Heart left ventricle (tissue), 16 donors: ENCODE measurements at regions of chr1 and their contacts with region 1.

Region 1: DNA sequence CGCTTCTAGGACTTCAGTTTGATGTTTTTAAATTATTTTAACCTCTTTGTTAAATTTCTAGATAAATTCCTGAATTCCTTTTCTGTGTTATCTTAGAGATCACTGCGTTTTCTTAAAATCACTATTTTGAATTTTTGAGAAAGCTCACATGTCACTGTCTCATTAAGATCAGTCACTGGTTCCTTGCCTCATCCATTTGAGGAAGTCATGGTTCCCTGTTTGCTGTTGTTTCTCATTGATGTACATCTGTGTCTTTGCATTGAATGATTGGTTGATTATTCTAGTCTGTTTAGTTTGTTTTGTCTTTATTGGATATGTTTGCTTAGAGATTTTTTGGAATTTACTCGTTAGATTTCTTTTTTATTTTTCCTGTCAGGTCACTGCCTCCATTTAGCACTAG is 50.1 kb downstream of the CRP start:
- DNase-seq: no peak
- ATAC-seq: no peak
- H3K4me3 ChIP-seq: no peak overlapping the region
- H3K27ac ChIP-seq: peak overlapping the region in 1 of 12 donors; percentile 78
- H3K4me1 ChIP-seq: peaks cover 0 to 11% (median 0%) of the 10 kb centered on the region in 12 donors
- H3K27me3 ChIP-seq: no peaks in the 10 kb centered on the region
- CTCF ChIP-seq: no peak
- POLR2A ChIP-seq: no peak

Region 2: GRCh38 chr1:159752135-159752580 is 87.9 kb after region 1 on chr1:
- intact Hi-C with region 1: loop called in 1 of 10 experiments (anchors 10 kb)
- DNase-seq: peak in 4 of 5 donors; percentile 61 to 71 (median 66)
- ATAC-seq: peak; percentile 75 to 90 (median 81)
- H3K4me3 ChIP-seq: no peak overlapping the region
- H3K27ac ChIP-seq: peak overlapping the region; percentile 38 to 75 (median 59)
- H3K4me1 ChIP-seq: peaks cover 0 to 17% (median 6%) of the 10 kb centered on the region in 12 donors
- H3K27me3 ChIP-seq: no peaks in the 10 kb centered on the region
- CTCF ChIP-seq: no peak
- POLR2A ChIP-seq: no peak